CD8-positive, alpha-beta T cell (primary cell): ENCODE measurements at regions of chr17 and their contacts with region 1.

Region 1: GRCh38 chr17:17972126-17972951 is at the starts of genes DRC3 and TOM1L2:
- DNase-seq: peak; percentile 100
- ATAC-seq: peak; percentile 90
- H3K4me3 ChIP-seq: peak within 1 kb of the TSS; percentile 62 to 66
- H3K4me3 Mint-ChIP-seq: peak within 1 kb of the TSS; percentile 97
- H3K27ac ChIP-seq: peak within 1 kb of the TSS; percentile 77 to 85
- H3K27ac Mint-ChIP-seq: peak within 1 kb of the TSS; percentile 97
- H3K4me1 ChIP-seq: peaks cover 13% of the 10 kb centered on the region
- H3K4me1 Mint-ChIP-seq: peaks cover 39% of the 10 kb centered on the region
- H3K27me3 ChIP-seq: no peaks in the 10 kb centered on the region
- H3K27me3 Mint-ChIP-seq: no peaks in the 10 kb centered on the region
- CTCF ChIP-seq: no peak
- total RNA-seq, gene DRC3: 0.61 to 0.90 TPM
- total RNA-seq, gene TOM1L2: 15.4 to 20.9 TPM

Region 2: GRCh38 chr17:17280613-17281549 is 691.5 kb before region 1 on chr17 and contains the start of gene COPS3:
- CTCF ChIA-PET with region 1: no interaction called
- POLR2A ChIA-PET with region 1: no interaction called
- intact Hi-C with region 1: loop called in 1 of 2 experiments (anchors 1 kb)
- DNase-seq: peak; percentile 91 to 99 (median 97)
- ATAC-seq: peak; percentile 88
- H3K4me3 ChIP-seq: peak within 1 kb of the TSS; percentile 74 to 93
- H3K4me3 Mint-ChIP-seq: peak within 1 kb of the TSS; percentile 96
- H3K27ac ChIP-seq: peak within 1 kb of the TSS; percentile 74 to 92
- H3K27ac Mint-ChIP-seq: peak within 1 kb of the TSS; percentile 87
- H3K4me1 ChIP-seq: peaks cover 26% of the 10 kb centered on the region
- H3K4me1 Mint-ChIP-seq: peaks cover 38% of the 10 kb centered on the region
- H3K27me3 ChIP-seq: no peaks in the 10 kb centered on the region
- H3K27me3 Mint-ChIP-seq: no peaks in the 10 kb centered on the region
- CTCF ChIP-seq: no peak
- total RNA-seq, gene COPS3: 94.1 to 96.3 TPM

Region 3: DNA sequence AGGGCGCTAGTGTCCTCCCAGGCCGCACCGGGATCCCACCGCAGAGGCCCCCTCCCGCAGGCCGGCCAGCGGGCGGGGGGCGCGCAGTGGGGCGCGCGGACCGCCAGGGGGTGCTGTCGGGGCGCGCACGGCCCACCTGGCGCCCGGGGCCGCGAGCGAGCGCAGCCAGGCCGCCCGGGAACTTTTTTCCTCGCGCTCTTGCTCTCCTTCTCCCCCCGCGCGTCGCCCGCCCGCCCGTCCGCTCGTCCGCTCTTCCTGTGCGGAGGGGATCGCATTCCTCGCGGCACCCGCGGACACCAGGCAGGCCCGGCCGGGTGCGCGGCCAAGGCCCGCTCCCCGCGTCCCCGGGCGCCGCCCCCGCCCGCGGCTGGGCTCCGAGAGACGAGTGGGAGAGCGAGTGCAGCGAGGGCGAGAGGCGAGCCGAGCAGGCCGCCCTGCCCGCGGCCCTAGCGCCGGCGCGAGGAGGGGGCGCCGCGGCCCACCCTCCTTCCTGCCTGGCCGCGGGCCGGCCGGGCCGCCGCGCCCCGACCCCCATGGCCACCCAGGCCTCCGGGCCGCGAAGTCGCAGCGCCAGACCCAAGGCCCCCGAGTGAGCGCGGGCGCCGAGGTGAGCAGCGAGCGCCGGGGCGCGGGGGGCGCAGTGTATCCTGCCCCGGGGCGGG is 291.0 kb before region 1 on chr17 and contains the start of gene RAI1:
- CTCF ChIA-PET with region 1: no interaction called
- POLR2A ChIA-PET with region 1: no interaction called
- intact Hi-C with region 1: loop called in 1 of 2 experiments (anchors 5 kb)
- DNase-seq: peak; percentile 51 to 89 (median 73)
- ATAC-seq: peak; percentile 58
- H3K4me3 ChIP-seq: peak within 1 kb of the TSS; percentile 74
- H3K4me3 Mint-ChIP-seq: peak within 1 kb of the TSS; percentile 93
- H3K27ac ChIP-seq: peak within 1 kb of the TSS; percentile 67 to 90
- H3K27ac Mint-ChIP-seq: peak within 1 kb of the TSS; percentile 77
- H3K4me1 ChIP-seq: peaks cover 34% of the 10 kb centered on the region
- H3K4me1 Mint-ChIP-seq: peaks cover 34% of the 10 kb centered on the region
- H3K27me3 ChIP-seq: no peaks in the 10 kb centered on the region
- H3K27me3 Mint-ChIP-seq: no peaks in the 10 kb centered on the region
- CTCF ChIP-seq: peak; percentile 50
- total RNA-seq, gene RAI1: 22.9 to 23.5 TPM

Region 4: GRCh38 chr17:17823433-17824118 is 148.8 kb before region 1 on chr17:
- CTCF ChIA-PET with region 1: no interaction called
- POLR2A ChIA-PET with region 1: no interaction called
- intact Hi-C with region 1: loop called in 1 of 2 experiments (anchors 5 kb)
- DNase-seq: peak; percentile 63 to 92 (median 80)
- ATAC-seq: peak; percentile 87
- H3K4me3 ChIP-seq: peak overlapping the region; percentile 46 to 55
- H3K4me3 Mint-ChIP-seq: peak overlapping the region; percentile 81
- H3K27ac ChIP-seq: peak overlapping the region; percentile 50 to 85
- H3K27ac Mint-ChIP-seq: peak overlapping the region; percentile 95
- H3K4me1 ChIP-seq: peaks cover 95% of the 10 kb centered on the region
- H3K4me1 Mint-ChIP-seq: peaks cover 91% of the 10 kb centered on the region
- H3K27me3 ChIP-seq: no peaks in the 10 kb centered on the region
- H3K27me3 Mint-ChIP-seq: no peaks in the 10 kb centered on the region
- CTCF ChIP-seq: no peak

Region 5: GRCh38 chr17:17919169-17920107 is 52.9 kb before region 1 on chr17:
- CTCF ChIA-PET with region 1: interaction called, 6 read pairs
- POLR2A ChIA-PET with region 1: interaction called, 3 read pairs
- intact Hi-C with region 1: loop called in 1 of 2 experiments (anchors 10 kb)
- DNase-seq: peak; percentile 34 to 79 (median 67)
- ATAC-seq: peak; percentile 97
- H3K4me3 ChIP-seq: no peak overlapping the region
- H3K4me3 Mint-ChIP-seq: no peak overlapping the region
- H3K27ac ChIP-seq: no peak overlapping the region
- H3K27ac Mint-ChIP-seq: no peak overlapping the region
- H3K4me1 ChIP-seq: peaks cover 6% of the 10 kb centered on the region
- H3K4me1 Mint-ChIP-seq: peaks cover 13% of the 10 kb centered on the region
- H3K27me3 ChIP-seq: no peaks in the 10 kb centered on the region
- H3K27me3 Mint-ChIP-seq: no peaks in the 10 kb centered on the region
- CTCF ChIP-seq: peak; percentile 73

Region 6: GRCh38 chr17:17942846-17943245 is 29.5 kb before region 1 on chr17:
- CTCF ChIA-PET with region 1: no interaction called
- POLR2A ChIA-PET with region 1: no interaction called
- intact Hi-C with region 1: no loop called
- DNase-seq: no peak
- ATAC-seq: no peak
- H3K4me3 ChIP-seq: no peak overlapping the region
- H3K4me3 Mint-ChIP-seq: no peak overlapping the region
- H3K27ac ChIP-seq: no peak overlapping the region
- H3K27ac Mint-ChIP-seq: no peak overlapping the region
- H3K4me1 ChIP-seq: peaks cover 8% of the 10 kb centered on the region
- H3K4me1 Mint-ChIP-seq: peaks cover 34% of the 10 kb centered on the region
- H3K27me3 ChIP-seq: no peaks in the 10 kb centered on the region
- H3K27me3 Mint-ChIP-seq: no peaks in the 10 kb centered on the region
- CTCF ChIP-seq: no peak

Region 7: GRCh38 chr17:18087610-18088491 is 115.5 kb after region 1 on chr17 and contains the start of gene DRG2:
- CTCF ChIA-PET with region 1: no interaction called
- POLR2A ChIA-PET with region 1: no interaction called
- intact Hi-C with region 1: loop called in 1 of 2 experiments (anchors 5 kb)
- DNase-seq: peak; percentile 79 to 94 (median 88)
- ATAC-seq: peak; percentile 91
- H3K4me3 ChIP-seq: peak within 1 kb of the TSS; percentile 80 to 90
- H3K4me3 Mint-ChIP-seq: peak within 1 kb of the TSS; percentile 99
- H3K27ac ChIP-seq: peak within 1 kb of the TSS; percentile 78 to 87
- H3K27ac Mint-ChIP-seq: peak within 1 kb of the TSS; percentile 98
- H3K4me1 ChIP-seq: peaks cover 15% of the 10 kb centered on the region
- H3K4me1 Mint-ChIP-seq: peaks cover 33% of the 10 kb centered on the region
- H3K27me3 ChIP-seq: no peaks in the 10 kb centered on the region
- H3K27me3 Mint-ChIP-seq: no peaks in the 10 kb centered on the region
- CTCF ChIP-seq: no peak
- total RNA-seq, gene DRG2: 45.4 to 46.3 TPM

Region 8: GRCh38 chr17:18141210-18141803 is 169.0 kb after region 1 on chr17:
- CTCF ChIA-PET with region 1: no interaction called
- POLR2A ChIA-PET with region 1: no interaction called
- intact Hi-C with region 1: no loop called
- DNase-seq: peak in 7 of 9 experiments; percentile 13 to 77 (median 44)
- ATAC-seq: peak; percentile 89
- H3K4me3 ChIP-seq: no peak overlapping the region
- H3K4me3 Mint-ChIP-seq: no peak overlapping the region
- H3K27ac ChIP-seq: no peak overlapping the region
- H3K27ac Mint-ChIP-seq: no peak overlapping the region
- H3K4me1 ChIP-seq: peaks cover 9% of the 10 kb centered on the region
- H3K4me1 Mint-ChIP-seq: peaks cover 4% of the 10 kb centered on the region
- H3K27me3 ChIP-seq: no peaks in the 10 kb centered on the region
- H3K27me3 Mint-ChIP-seq: peaks cover 2% of the 10 kb centered on the region
- CTCF ChIP-seq: peak; percentile 73